ENCODE measurements at regions of chr1 and their contacts with region 1.

Region 1: DNA sequence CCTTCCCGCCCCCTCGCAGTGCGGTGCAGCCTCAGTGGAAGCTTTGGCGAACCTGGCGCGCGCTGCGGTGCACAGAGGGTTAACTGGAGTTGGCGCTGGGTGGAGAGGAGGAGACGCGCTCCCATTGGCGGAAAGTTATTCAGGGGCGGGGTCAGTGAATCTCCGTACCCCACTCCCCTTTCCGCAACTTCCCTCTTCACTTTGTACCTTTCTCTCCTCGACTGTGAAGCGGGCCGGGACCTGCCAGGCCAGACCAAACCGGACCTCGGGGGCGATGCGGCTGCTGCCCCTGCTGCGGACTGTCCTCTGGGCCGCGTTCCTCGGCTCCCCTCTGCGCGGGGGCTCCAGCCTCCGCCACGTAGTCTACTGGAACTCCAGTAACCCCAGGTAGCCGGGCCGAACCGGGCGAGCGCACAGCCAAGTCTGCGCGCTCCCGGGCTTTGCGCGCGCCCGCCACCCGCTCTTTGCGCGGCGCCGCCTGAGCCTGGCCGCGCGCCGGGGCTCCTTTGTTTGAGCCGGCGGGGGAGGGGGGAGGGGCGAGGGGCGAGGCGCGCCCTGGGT is at the start of gene EFNA4:
- DNase-seq: peak; percentile 82
- ATAC-seq: peak; percentile 79
- H3K4me3 Mint-ChIP-seq: peak within 1 kb of the TSS; percentile 93
- H3K27ac Mint-ChIP-seq: peak within 1 kb of the TSS; percentile 43
- H3K4me1 Mint-ChIP-seq: peaks cover 29% of the 10 kb centered on the region
- H3K27me3 Mint-ChIP-seq: peaks cover 5% of the 10 kb centered on the region
- total RNA-seq, gene EFNA4: 7.9 to 8.1 TPM

Region 2: DNA sequence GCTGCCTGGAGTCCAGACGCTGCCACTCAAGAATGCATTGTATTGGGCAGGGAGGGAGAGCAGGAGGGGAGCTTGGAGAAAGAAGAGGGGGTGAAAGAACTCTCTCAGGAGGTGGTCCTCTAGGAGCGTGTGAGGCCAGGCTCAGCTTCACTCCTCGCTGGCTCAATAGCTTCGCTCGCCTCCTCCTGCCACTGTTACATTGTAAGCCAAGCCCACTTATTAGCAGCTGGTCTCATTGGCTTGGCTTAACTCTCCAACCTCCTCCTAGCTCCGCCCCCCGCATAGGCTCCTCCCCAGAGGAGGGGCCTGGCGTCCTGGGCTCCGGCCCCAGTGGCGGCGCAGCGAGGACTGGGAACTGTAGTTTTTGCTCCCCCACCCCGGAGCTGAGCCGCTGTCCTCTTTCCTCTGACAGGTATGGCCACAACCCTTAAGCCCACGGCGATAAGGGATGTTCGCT is 193.5 kb before region 1 on chr1 and contains the start of gene KCNN3:
- POLR2A ChIA-PET with region 1: no interaction called
- DNase-seq: peak; percentile 84
- ATAC-seq: peak; percentile 91
- H3K4me3 Mint-ChIP-seq: no peak within 1 kb of the TSS
- H3K27ac Mint-ChIP-seq: no peak within 1 kb of the TSS
- H3K4me1 Mint-ChIP-seq: peaks cover 21% of the 10 kb centered on the region
- H3K27me3 Mint-ChIP-seq: peaks cover 41% of the 10 kb centered on the region
- total RNA-seq, gene KCNN3: 0.06 TPM in 1 of 2 experiments, not detected in the other

Region 3: DNA sequence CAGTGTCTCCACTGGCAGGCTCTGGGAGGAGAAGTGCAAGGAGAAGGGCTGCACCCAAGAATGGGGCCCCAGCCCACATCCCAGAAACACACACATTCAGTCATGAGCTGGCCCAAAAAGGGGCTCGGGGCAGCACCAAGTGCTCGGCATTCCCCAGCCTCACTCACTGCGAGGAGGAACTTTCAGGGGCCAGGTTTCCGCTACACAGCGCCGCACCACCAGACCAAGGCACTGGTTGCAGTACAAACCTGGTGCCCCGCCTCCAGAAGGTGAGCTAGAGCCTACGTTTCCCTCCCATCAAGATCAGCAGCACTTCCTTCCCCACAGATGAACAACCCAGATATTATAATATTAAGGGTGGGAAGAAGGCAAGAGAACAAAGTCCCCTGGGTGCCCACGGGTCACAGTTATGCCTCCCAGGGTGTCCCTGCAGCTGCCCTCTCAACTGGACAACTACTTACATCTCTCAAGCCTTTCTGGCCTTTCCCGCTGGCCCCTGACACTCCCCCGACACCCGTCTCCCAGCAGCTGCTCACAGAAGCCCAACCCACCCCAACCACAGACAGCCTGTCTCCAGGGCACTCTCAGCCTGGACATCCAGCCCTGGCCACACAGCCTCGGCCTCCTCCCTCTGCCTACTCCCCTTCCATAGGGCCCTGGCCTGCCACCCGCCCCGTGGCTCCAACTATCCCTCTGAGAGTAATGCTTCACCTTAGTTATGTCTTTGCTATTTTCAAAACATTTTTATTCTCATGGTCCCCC is 111.5 kb before region 1 on chr1:
- POLR2A ChIA-PET with region 1: no interaction called
- DNase-seq: peak; percentile 62
- ATAC-seq: peak; percentile 47
- H3K4me3 Mint-ChIP-seq: peak overlapping the region; percentile 97
- H3K27ac Mint-ChIP-seq: peak overlapping the region; percentile 99
- H3K4me1 Mint-ChIP-seq: peaks cover 62% of the 10 kb centered on the region
- H3K27me3 Mint-ChIP-seq: no peaks in the 10 kb centered on the region

Region 4: GRCh38 chr1:155084722-155085503 is 21.3 kb after region 1 on chr1:
- POLR2A ChIA-PET with region 1: interaction called, 26 read pairs
- DNase-seq: peak; percentile 97
- ATAC-seq: peak; percentile 85
- H3K4me3 Mint-ChIP-seq: peak overlapping the region; percentile 97
- H3K27ac Mint-ChIP-seq: peak overlapping the region; percentile 98
- H3K4me1 Mint-ChIP-seq: peaks cover 29% of the 10 kb centered on the region
- H3K27me3 Mint-ChIP-seq: peaks cover 36% of the 10 kb centered on the region

Region 5: GRCh38 chr1:155134858-155135414 is 71.3 kb after region 1 on chr1:
- POLR2A ChIA-PET with region 1: no interaction called
- DNase-seq: no peak
- ATAC-seq: no peak
- H3K4me3 Mint-ChIP-seq: peak overlapping the region; percentile 91
- H3K27ac Mint-ChIP-seq: peak overlapping the region; percentile 95
- H3K4me1 Mint-ChIP-seq: peaks cover 27% of the 10 kb centered on the region
- H3K27me3 Mint-ChIP-seq: peaks cover under 1% of the 10 kb centered on the region